HepG2 (cell line): ENCODE measurements at regions of chr3 and their contacts with region 1.

Region 1: DNA sequence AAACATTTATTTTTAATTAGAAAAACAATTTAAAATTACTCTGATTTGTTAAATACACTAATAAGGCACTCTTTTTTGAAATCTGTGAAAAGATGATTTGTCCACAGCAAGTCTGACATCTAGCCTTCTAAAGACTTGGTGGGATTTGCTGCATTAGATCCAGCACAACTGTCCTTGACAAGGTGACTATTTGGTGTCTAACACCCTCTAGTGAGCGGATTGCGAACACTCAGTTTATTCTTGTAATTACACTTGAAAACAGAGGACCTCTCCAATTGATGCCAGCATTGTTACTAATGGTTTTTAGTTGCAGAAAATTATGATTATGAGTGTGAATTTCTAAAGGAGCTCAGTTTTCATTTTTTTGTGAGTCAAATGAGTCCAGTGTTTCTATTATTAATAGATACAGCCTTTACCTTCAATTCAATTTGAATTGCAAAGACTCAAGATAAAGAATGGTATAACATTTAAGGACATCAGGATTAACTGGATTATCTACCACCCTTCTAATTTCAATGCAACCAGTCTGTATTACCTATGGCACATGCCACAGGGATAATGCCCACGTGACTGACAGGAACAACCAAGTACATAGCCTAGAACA is 29.7 kb upstream of the STRIT1 start:
- DNase-seq: peak; percentile 62
- ATAC-seq: peak; percentile 91
- H3K4me3 ChIP-seq: no peak overlapping the region
- H3K27ac ChIP-seq: no peak overlapping the region
- H3K4me1 ChIP-seq: no peaks in the 10 kb centered on the region
- H3K27me3 ChIP-seq: no peaks in the 10 kb centered on the region
- CTCF ChIP-seq: peak; percentile 85
- EP300 ChIP-seq: no peak
- POLR2A ChIP-seq: no peak
- RAD21 ChIP-seq: peak; percentile 51; the same call in 1 of the 2 replicates

Region 2: DNA sequence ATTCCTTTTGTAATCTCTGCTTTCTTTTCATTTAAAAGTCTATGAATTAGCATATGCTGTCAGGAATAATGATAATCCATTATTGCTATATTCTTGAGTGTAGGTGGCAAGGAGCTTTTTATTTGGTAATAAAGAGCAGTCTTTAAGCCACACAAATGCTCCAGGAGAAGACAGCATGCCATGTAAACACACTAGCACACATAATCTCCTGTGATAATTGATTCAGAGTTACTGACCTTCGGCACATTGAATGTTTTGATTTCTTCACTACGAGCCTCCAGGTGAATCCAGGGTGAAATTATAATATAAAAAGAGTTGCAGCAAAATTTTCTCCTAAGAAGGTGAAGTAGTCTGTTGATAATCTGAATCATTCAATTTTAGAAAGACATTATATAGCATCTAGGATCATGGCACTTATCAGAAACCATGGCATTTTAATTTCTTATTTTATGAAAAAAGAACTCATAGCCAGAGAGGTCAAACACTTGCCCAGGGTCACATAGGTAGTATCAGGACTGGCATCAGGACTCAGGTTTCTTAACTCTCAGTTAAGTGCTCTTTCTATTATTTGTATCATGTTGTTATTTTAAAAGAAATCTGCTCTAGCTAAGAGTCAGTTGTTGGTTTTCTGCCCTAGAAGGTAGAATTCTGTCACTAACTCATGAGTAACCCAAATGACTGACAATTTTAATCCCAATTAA is 977.6 kb before region 1 on chr3:
- CTCF ChIA-PET with region 1: no interaction called
- POLR2A ChIA-PET with region 1: no interaction called
- in situ Hi-C with region 1: loop called (anchors 10 kb)
- intact Hi-C with region 1: no loop called
- DNase-seq: no peak
- ATAC-seq: no peak
- H3K4me3 ChIP-seq: no peak overlapping the region
- H3K27ac ChIP-seq: no peak overlapping the region
- H3K4me1 ChIP-seq: no peaks in the 10 kb centered on the region
- H3K27me3 ChIP-seq: no peaks in the 10 kb centered on the region; a peak in 1 of 5 replicates
- CTCF ChIP-seq: no peak
- EP300 ChIP-seq: no peak
- POLR2A ChIP-seq: no peak
- RAD21 ChIP-seq: no peak

Region 3: DNA sequence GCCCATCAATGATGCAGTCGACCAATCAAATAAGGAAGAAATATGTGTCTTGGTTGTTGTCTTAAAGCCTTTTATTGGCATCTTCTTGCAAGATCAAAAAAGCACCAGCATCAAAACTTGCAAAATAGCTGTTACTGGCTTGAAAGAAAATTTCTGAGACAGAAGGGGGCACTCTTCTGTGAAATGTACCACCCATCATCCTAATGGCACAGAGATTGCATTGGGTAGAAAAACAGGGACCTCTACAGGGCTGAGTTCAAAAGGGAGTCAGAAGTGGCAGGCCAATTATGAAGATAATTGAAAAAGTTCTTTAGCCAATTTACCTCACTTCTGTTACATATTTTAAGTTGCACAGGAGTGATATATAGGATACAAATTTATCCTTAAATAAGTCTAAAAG is 770.8 kb before region 1 on chr3:
- CTCF ChIA-PET with region 1: no interaction called
- POLR2A ChIA-PET with region 1: no interaction called
- in situ Hi-C with region 1: no loop called
- intact Hi-C with region 1: loop called (anchors 5 kb)
- DNase-seq: peak; percentile 6
- ATAC-seq: peak; percentile 61; the same call in 2 of the 3 replicates
- H3K4me3 ChIP-seq: no peak overlapping the region
- H3K27ac ChIP-seq: no peak overlapping the region
- H3K4me1 ChIP-seq: no peaks in the 10 kb centered on the region
- H3K27me3 ChIP-seq: no peaks in the 10 kb centered on the region
- CTCF ChIP-seq: peak; percentile 8; the same call in 1 of the 2 replicates
- EP300 ChIP-seq: no peak
- POLR2A ChIP-seq: no peak
- RAD21 ChIP-seq: no peak

Region 4: GRCh38 chr3:154684021-154684420 is 639.1 kb before region 1 on chr3:
- CTCF ChIA-PET with region 1: no interaction called
- POLR2A ChIA-PET with region 1: no interaction called
- in situ Hi-C with region 1: no loop called
- intact Hi-C with region 1: loop called (anchors 10 kb)
- DNase-seq: peak; percentile 5
- ATAC-seq: peak; percentile 56; the same call in 2 of the 3 replicates
- H3K4me3 ChIP-seq: no peak overlapping the region
- H3K27ac ChIP-seq: no peak overlapping the region
- H3K4me1 ChIP-seq: no peaks in the 10 kb centered on the region
- H3K27me3 ChIP-seq: no peaks in the 10 kb centered on the region
- CTCF ChIP-seq: peak; percentile 28; the same call in 1 of the 2 replicates
- EP300 ChIP-seq: no peak
- POLR2A ChIP-seq: no peak
- RAD21 ChIP-seq: no peak

Region 5: GRCh38 chr3:154758109-154758868 is 564.9 kb before region 1 on chr3:
- CTCF ChIA-PET with region 1: no interaction called
- POLR2A ChIA-PET with region 1: no interaction called
- in situ Hi-C with region 1: loop called (anchors 25 kb)
- intact Hi-C with region 1: loop called (anchors 1 kb)
- DNase-seq: no peak
- ATAC-seq: no peak
- H3K4me3 ChIP-seq: no peak overlapping the region
- H3K27ac ChIP-seq: no peak overlapping the region
- H3K4me1 ChIP-seq: no peaks in the 10 kb centered on the region
- H3K27me3 ChIP-seq: no peaks in the 10 kb centered on the region
- CTCF ChIP-seq: no peak
- EP300 ChIP-seq: no peak
- POLR2A ChIP-seq: no peak
- RAD21 ChIP-seq: no peak

Region 6: GRCh38 chr3:154904328-154904727 is 418.8 kb before region 1 on chr3:
- CTCF ChIA-PET with region 1: interaction called, 6 read pairs
- POLR2A ChIA-PET with region 1: no interaction called
- in situ Hi-C with region 1: loop called (anchors 10 kb)
- intact Hi-C with region 1: no loop called
- DNase-seq: peak; percentile 2
- ATAC-seq: peak; percentile 79
- H3K4me3 ChIP-seq: no peak overlapping the region
- H3K27ac ChIP-seq: no peak overlapping the region
- H3K4me1 ChIP-seq: no peaks in the 10 kb centered on the region
- H3K27me3 ChIP-seq: no peaks in the 10 kb centered on the region
- CTCF ChIP-seq: peak; percentile 48
- EP300 ChIP-seq: no peak
- POLR2A ChIP-seq: no peak
- RAD21 ChIP-seq: no peak

Region 7: DNA sequence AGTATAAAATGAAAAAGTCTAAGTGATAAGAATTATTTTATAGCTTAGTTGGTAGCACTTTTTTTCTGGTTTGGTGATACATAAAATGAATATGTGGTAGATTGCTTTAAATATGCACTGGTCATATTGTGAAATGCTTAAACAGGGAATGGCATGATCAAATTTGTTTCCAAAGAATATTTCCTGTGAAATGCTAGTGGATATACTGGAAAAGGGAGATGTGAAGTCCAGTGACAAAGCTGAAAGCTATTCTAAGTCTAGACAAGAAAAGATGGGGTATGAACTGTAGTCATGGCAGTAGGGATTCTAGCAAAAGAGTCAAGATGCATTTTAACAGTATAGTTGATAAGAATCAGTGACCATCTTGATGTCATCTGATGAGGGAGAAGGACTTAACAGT is 342.0 kb before region 1 on chr3:
- CTCF ChIA-PET with region 1: no interaction called
- POLR2A ChIA-PET with region 1: no interaction called
- in situ Hi-C with region 1: no loop called
- intact Hi-C with region 1: no loop called
- DNase-seq: no peak
- ATAC-seq: no peak
- H3K4me3 ChIP-seq: no peak overlapping the region
- H3K27ac ChIP-seq: no peak overlapping the region
- H3K4me1 ChIP-seq: no peaks in the 10 kb centered on the region
- H3K27me3 ChIP-seq: no peaks in the 10 kb centered on the region
- CTCF ChIP-seq: no peak
- EP300 ChIP-seq: no peak
- POLR2A ChIP-seq: no peak
- RAD21 ChIP-seq: no peak

Region 8: GRCh38 chr3:155079746-155080487 is 243.2 kb before region 1 on chr3 and contains the start of gene MME:
- CTCF ChIA-PET with region 1: no interaction called
- POLR2A ChIA-PET with region 1: no interaction called
- in situ Hi-C with region 1: no loop called
- intact Hi-C with region 1: loop called (anchors 10 kb)
- DNase-seq: no peak
- ATAC-seq: peak; percentile 95
- H3K4me3 ChIP-seq: peak within 1 kb of the TSS; percentile 7 to 61 (median 21); a peak in 3 of 6 replicates
- H3K27ac ChIP-seq: no peak within 1 kb of the TSS
- H3K4me1 ChIP-seq: no peaks in the 10 kb centered on the region
- H3K27me3 ChIP-seq: peaks cover 0 to 28% of the 10 kb centered on the region in 2 experiments; a peak in 4 of 5 replicates
- CTCF ChIP-seq: no peak
- EP300 ChIP-seq: no peak
- POLR2A ChIP-seq: no peak
- RAD21 ChIP-seq: no peak
- total RNA-seq, gene MME: not detected in 2 replicates